A673 (cell line): ENCODE measurements at regions of chr12 and their contacts with region 1.

Region 1: GRCh38 chr12:110998165-110998564 is 77.8 kb upstream of the MYL2 start:
- DNase-seq: peak; percentile 16
- H3K4me3 ChIP-seq: no peak overlapping the region
- H3K27ac ChIP-seq: no peak overlapping the region
- H3K4me1 ChIP-seq: no peaks in the 10 kb centered on the region
- H3K27me3 ChIP-seq: no peaks in the 10 kb centered on the region
- CTCF ChIP-seq: no peak

Region 2: DNA sequence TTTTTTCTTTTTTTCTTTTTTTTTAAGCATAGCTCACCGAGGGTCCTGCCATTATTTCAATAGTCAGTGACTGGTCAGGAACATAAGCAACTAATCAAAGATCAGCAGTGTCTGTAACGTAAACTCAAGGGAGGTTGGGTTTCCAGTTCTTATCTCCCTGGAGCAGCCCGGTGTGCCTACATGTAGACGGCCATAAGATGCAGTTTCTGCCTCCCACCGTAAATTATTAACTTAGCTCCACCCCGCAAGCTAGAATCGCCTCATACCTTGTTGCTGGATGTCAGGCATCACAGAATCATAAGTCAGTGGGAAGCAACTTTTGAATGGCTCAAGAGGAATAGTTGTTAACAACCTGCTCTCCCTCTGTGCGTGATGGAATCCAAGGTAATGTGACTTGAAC is 1650.6 kb before region 1 on chr12 and contains the start of gene MYO1H:
- CTCF ChIA-PET with region 1: no interaction called
- POLR2A ChIA-PET with region 1: interaction called, 13 read pairs
- intact Hi-C with region 1: no loop called
- DNase-seq: no peak
- H3K4me3 ChIP-seq: no peak within 1 kb of the TSS
- H3K27ac ChIP-seq: no peak within 1 kb of the TSS
- H3K4me1 ChIP-seq: no peaks in the 10 kb centered on the region
- H3K27me3 ChIP-seq: peaks cover 23% of the 10 kb centered on the region
- CTCF ChIP-seq: no peak
- total RNA-seq, gene MYO1H: not detected in 2 replicates